MCF 10A (cell line): ENCODE measurements at regions of chr20 and their contacts with region 1.

Region 1: GRCh38 chr20:50790651-50791277 is 4.1 kb upstream of the BCAS4 start:
- DNase-seq: peak; percentile 85
- H3K4me3 Mint-ChIP-seq: no peak overlapping the region
- H3K27ac Mint-ChIP-seq: peak overlapping the region; percentile 69
- H3K4me1 Mint-ChIP-seq: peaks cover 6% of the 10 kb centered on the region
- H3K27me3 Mint-ChIP-seq: no peaks in the 10 kb centered on the region
- CTCF ChIP-seq: peak; percentile 70

Region 2: GRCh38 chr20:50731055-50731871 is 59.5 kb before region 1 on chr20 and contains the start of gene PARD6B:
- CTCF ChIA-PET with region 1: interaction called, 7 read pairs
- POLR2A ChIA-PET with region 1: interaction called, 12 read pairs
- intact Hi-C with region 1: no loop called
- DNase-seq: peak; percentile 99
- H3K4me3 Mint-ChIP-seq: peak within 1 kb of the TSS; percentile 77
- H3K27ac Mint-ChIP-seq: peak within 1 kb of the TSS; percentile 74
- H3K4me1 Mint-ChIP-seq: peaks cover 40% of the 10 kb centered on the region
- H3K27me3 Mint-ChIP-seq: no peaks in the 10 kb centered on the region
- CTCF ChIP-seq: no peak
- total RNA-seq, gene PARD6B: 5.3 and 5.8 TPM in 2 replicates

Region 3: DNA sequence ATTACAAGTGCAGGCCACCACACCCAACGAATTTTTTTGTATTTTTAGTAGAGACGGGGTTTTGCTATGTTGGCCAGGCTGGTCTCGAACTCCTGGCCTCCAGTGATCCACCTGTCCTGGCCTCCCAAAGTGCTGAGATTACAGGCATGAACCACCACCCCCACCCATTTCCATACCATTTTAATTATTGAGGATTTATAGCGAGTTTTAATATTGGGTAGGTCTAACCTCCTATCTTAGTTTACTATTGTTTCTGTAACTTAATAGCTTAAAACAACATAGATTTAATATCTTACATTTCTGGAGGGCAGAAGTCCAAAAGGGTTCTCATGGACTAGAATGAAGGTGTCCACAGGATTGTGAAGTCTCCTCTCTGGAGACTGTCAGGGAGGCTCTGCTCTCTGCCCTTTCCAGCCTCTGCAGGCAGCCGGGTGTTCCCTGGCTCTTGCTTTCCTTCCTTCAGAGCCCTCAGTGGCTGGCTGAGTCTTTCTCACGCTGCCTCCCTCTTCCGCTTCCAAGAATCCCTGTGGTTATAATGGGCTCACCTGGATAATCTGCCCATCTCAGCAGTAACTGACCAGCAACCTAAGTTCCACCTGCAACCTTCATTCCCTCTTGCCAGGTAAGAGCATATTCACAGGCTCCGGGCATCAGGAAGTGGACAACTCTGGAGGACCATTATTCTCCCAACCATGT is 14.5 kb before region 1 on chr20:
- CTCF ChIA-PET with region 1: interaction called, 39 read pairs
- POLR2A ChIA-PET with region 1: interaction called, 4 read pairs
- intact Hi-C with region 1: no loop called
- DNase-seq: no peak
- H3K4me3 Mint-ChIP-seq: no peak overlapping the region
- H3K27ac Mint-ChIP-seq: no peak overlapping the region
- H3K4me1 Mint-ChIP-seq: no peaks in the 10 kb centered on the region
- H3K27me3 Mint-ChIP-seq: no peaks in the 10 kb centered on the region
- CTCF ChIP-seq: no peak

Region 4: DNA sequence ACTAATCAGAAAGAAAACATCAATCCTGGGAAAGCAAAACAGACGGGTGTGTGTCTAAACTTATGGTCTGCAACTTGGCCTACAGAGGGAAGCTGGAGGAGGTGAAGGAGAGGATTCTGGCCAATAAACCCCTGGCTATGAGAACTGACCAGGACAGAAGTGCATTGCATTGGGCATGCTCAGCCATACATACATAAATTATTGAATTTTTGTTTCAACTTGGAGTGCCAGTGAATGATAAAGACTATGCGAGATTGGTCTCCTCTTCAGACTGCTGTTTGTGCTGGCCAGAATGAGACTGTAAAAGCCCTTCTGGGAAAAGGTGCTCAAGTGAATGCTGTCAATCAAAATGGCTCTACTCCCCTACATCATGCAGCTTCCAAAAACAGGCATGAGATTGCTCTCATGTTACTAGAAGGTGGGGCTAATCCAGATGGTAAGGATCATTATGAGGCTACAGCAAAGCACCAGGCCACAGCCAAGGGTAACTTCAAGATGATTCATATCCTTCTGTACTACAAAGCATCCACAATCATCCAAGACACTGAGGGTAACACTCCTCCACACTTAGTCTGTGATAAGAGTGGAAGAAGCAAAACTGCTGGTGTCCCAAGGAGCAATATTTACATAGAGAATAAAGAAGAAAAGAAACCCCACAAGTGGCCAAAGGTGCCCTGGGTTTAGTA is 123.1 kb after region 1 on chr20:
- CTCF ChIA-PET with region 1: interaction called, 10 read pairs
- POLR2A ChIA-PET with region 1: interaction called, 25 read pairs
- intact Hi-C with region 1: no loop called
- DNase-seq: peak; percentile 68
- H3K4me3 Mint-ChIP-seq: no peak overlapping the region
- H3K27ac Mint-ChIP-seq: peak overlapping the region; percentile 6
- H3K4me1 Mint-ChIP-seq: peaks cover 57% of the 10 kb centered on the region
- H3K27me3 Mint-ChIP-seq: no peaks in the 10 kb centered on the region
- CTCF ChIP-seq: no peak

Region 5: GRCh38 chr20:50958615-50959542 is 168.1 kb after region 1 on chr20 and contains the start of gene MOCS3:
- CTCF ChIA-PET with region 1: interaction called, 15 read pairs
- POLR2A ChIA-PET with region 1: interaction called, 66 read pairs
- intact Hi-C with region 1: no loop called
- DNase-seq: peak; percentile 92
- H3K4me3 Mint-ChIP-seq: peak within 1 kb of the TSS; percentile 91
- H3K27ac Mint-ChIP-seq: peak within 1 kb of the TSS; percentile 100
- H3K4me1 Mint-ChIP-seq: peaks cover 15% of the 10 kb centered on the region
- H3K27me3 Mint-ChIP-seq: no peaks in the 10 kb centered on the region
- CTCF ChIP-seq: no peak
- total RNA-seq, gene MOCS3: 5.8 and 6.0 TPM in 2 replicates

Region 6: GRCh38 chr20:51306503-51307358 is 516.0 kb after region 1 on chr20:
- CTCF ChIA-PET with region 1: interaction called, 7 read pairs
- POLR2A ChIA-PET with region 1: no interaction called
- intact Hi-C with region 1: loop called (anchors 5 kb)
- DNase-seq: peak; percentile 73
- H3K4me3 Mint-ChIP-seq: no peak overlapping the region
- H3K27ac Mint-ChIP-seq: no peak overlapping the region
- H3K4me1 Mint-ChIP-seq: no peaks in the 10 kb centered on the region
- H3K27me3 Mint-ChIP-seq: no peaks in the 10 kb centered on the region
- CTCF ChIP-seq: peak; percentile 90